ENCODE measurements at regions of chr3 and their contacts with region 1.

Region 1: GRCh38 chr3:129120254-129121004 is 1.2 kb downstream of the RAB43 start:
- DNase-seq: peak; percentile 98
- H3K4me3 Mint-ChIP-seq: peak overlapping the region; percentile 94
- H3K27ac Mint-ChIP-seq: peak overlapping the region; percentile 99
- H3K4me1 Mint-ChIP-seq: peaks cover 46% of the 10 kb centered on the region
- H3K27me3 Mint-ChIP-seq: no peaks in the 10 kb centered on the region

Region 2: DNA sequence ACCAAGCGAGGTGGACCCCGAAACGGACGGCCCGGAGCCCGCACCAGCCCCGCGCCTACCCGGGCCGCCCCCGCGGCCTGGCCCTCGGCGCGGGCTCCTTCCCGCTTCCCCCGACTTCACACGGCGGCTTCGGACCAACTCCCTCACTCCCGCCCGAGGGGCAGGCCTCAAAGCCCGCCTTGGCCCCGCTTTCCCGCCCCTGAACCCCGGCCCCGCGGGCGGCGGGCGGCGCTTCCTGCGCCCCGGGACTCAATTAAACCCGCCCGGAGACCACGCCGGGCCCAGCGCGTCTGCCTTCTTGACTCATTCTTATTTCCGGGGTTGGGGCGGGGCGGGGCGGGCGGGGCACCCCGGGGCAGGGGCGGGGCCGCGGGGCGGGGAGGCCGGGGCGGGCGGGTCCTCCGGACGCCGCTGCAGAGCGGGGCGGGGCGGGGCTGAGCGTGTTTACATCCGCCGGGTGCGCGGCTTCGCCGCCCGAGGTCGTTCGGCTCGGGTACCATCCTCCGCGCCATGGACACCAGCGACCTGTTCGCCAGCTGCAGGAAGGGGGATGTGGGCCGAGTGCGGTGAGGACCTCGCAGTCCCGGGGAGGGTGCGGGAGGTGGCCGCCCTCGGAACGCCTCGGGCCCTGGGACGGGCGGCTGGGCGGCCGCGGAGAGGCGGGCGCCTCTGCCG is 1447.8 kb before region 1 on chr3 and contains the start of gene ABTB1:
- CTCF ChIA-PET with region 1: no interaction called
- intact Hi-C with region 1: loop called (anchors 10 kb)
- DNase-seq: peak; percentile 89
- H3K4me3 Mint-ChIP-seq: peak within 1 kb of the TSS; percentile 86
- H3K27ac Mint-ChIP-seq: peak within 1 kb of the TSS; percentile 87
- H3K4me1 Mint-ChIP-seq: peaks cover 21% of the 10 kb centered on the region
- H3K27me3 Mint-ChIP-seq: no peaks in the 10 kb centered on the region
- total RNA-seq, gene ABTB1: 10.6 to 13.5 TPM

Region 3: DNA sequence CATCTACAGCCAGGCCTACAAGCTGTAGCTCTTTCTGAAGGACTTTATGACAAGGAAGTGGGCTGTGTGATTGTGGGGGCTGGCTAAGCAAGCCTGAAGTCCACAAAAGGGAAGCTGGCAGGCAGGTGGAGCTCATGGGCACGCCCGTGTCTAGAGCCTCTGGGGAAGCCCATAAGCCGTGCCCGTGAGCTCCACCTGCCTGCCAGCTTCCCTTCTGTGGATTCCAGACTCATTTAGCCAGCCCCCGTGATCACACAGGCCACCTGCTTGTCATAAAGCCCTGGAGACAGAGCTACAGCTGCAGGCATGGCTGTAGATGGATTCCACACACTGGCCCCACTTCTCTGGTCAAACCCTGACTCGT is 104.1 kb before region 1 on chr3:
- CTCF ChIA-PET with region 1: interaction called, 14 read pairs
- intact Hi-C with region 1: no loop called
- DNase-seq: peak; percentile 88
- H3K4me3 Mint-ChIP-seq: peak overlapping the region; percentile 73
- H3K27ac Mint-ChIP-seq: peak overlapping the region; percentile 95
- H3K4me1 Mint-ChIP-seq: peaks cover 38% of the 10 kb centered on the region
- H3K27me3 Mint-ChIP-seq: no peaks in the 10 kb centered on the region

Region 4: DNA sequence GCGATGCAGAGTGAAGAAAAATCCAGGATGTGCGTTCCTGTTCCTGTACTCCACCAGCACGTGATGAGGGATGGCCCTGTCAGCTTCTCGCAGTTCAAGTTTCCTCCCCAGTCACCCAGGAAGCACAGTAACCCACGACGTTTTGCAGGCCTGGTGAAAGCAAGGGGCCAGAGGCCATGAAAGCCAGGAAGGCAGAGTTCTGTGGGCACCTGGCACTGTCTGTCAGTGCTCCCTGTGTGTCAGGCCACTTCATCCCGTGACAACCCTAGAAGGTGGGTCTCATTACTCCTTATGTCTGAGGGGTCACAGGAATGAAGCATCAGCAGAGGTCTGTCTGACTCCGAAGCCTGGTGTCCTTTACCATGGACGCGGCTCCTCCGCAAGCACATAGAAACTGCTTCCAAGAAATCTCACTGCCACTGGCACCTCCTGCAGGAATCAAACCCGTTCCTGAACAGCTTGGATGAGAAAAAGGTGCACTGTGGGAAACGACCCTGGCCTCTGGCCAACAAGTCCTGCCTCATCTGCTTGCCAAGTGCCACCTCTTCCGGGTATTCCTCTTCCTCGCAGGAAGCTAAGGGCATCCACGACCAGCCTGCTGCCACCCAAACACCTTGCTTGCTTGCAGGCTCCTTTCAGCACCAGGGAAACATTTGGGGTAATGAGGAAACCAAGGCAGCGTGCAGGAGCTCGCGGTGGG is 13.4 kb before region 1 on chr3:
- CTCF ChIA-PET with region 1: interaction called, 12 read pairs
- intact Hi-C with region 1: loop called (anchors 1 kb)
- DNase-seq: no peak
- H3K4me3 Mint-ChIP-seq: no peak overlapping the region
- H3K27ac Mint-ChIP-seq: peak overlapping the region; percentile 59
- H3K4me1 Mint-ChIP-seq: peaks cover 86% of the 10 kb centered on the region
- H3K27me3 Mint-ChIP-seq: no peaks in the 10 kb centered on the region

Region 5: GRCh38 chr3:129183569-129184395 is 63.4 kb after region 1 on chr3 and contains the start of gene CNBP:
- CTCF ChIA-PET with region 1: no interaction called
- intact Hi-C with region 1: loop called (anchors 1 kb)
- DNase-seq: peak; percentile 93
- H3K4me3 Mint-ChIP-seq: peak within 1 kb of the TSS; percentile 96
- H3K27ac Mint-ChIP-seq: peak within 1 kb of the TSS; percentile 95
- H3K4me1 Mint-ChIP-seq: peaks cover 35% of the 10 kb centered on the region
- H3K27me3 Mint-ChIP-seq: no peaks in the 10 kb centered on the region
- total RNA-seq, gene CNBP: 490 to 500 TPM

Region 6: DNA sequence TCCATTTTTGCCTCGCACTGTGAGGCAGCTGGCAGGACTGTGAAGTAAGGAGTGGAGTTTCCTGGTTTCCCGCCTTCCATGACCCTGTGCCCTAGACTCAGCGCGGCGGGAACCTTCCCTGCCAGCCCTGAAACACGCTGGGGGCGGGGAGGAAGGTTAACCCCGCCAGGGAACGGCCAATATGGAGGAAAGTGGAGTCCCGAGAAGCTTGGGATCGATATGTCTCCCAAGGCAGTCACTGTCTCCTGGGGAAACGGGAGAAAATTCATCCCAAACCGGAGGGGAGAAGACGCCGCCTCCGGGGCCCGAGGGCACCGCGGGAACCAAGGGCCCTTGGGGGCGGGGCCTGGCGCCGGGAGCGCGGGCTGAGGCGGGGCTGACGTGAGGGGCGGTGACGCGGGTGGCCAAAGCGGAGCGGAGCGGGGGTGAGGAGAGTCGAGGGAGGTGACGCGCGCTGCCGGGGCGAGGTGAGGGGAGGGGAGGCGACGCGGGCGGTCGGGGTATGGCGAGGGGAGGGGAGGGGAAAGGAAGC is 158.1 kb after region 1 on chr3 and contains the start of gene HMCES:
- CTCF ChIA-PET with region 1: no interaction called
- intact Hi-C with region 1: loop called (anchors 1 kb)
- DNase-seq: peak; percentile 96
- H3K4me3 Mint-ChIP-seq: peak within 1 kb of the TSS; percentile 87
- H3K27ac Mint-ChIP-seq: peak within 1 kb of the TSS; percentile 90
- H3K4me1 Mint-ChIP-seq: peaks cover 48% of the 10 kb centered on the region
- H3K27me3 Mint-ChIP-seq: no peaks in the 10 kb centered on the region
- total RNA-seq, gene HMCES: 35.0 to 35.8 TPM

Region 7: DNA sequence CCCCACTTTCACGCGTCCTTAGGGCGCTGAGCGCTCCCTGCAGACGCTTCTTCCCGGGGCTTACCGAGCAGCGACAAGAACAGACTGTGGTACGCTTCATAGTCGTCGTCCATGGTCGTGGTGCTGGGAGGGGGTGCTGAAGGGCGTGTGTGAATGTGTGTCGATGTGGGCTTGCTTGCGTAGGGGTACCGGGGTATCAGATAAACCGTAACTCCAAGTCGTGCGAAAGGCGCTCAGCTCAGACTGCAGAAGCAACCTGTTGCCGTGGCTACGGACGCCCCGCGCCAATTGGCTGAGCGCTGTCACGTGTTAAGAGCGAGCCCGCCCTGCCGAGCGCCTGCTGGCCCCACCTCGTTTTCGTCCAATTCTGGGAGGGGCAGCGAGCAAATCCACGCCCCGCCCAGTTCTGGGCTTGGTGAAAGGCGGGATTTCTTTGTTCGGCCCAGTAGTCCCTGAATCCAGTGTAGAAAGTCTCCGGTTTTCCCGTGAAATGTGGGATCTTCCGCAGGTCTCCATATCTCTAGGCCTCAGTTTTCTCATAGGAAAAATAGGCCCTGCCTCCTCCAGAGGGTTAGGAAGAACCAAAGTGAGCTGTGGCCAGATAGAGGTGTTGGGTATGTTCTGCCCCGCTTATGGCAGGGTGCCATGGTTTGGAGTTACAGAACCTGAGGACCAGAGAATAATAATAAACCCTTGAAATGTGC is 308.1 kb after region 1 on chr3 and contains the start of gene EFCAB12:
- CTCF ChIA-PET with region 1: no interaction called
- intact Hi-C with region 1: loop called (anchors 10 kb)
- DNase-seq: peak; percentile 94
- H3K4me3 Mint-ChIP-seq: peak within 1 kb of the TSS; percentile 65
- H3K27ac Mint-ChIP-seq: peak within 1 kb of the TSS; percentile 71
- H3K4me1 Mint-ChIP-seq: peaks cover 45% of the 10 kb centered on the region
- H3K27me3 Mint-ChIP-seq: no peaks in the 10 kb centered on the region
- total RNA-seq, gene EFCAB12: 0.37 to 0.81 TPM